Activated T-helper 1 cell treated with anti-CD3 and anti-CD28 coated beads, Interleukin-12 subunit alpha, Interleukin-12 subunit beta, Interleukin-2, Interleukin-4 antibody, amounts not matched to agents 30 ng/mL and 10 ng/mL and 1 ng/mL, durations not matched to agents 14 hours and 24 hours and 36 hours (primary cell): ENCODE measurements at regions of chr6 and their contacts with region 1.

Region 1: GRCh38 chr6:144149891-144150709 is at the start of gene STX11:
- DNase-seq: peak; percentile 78
- H3K4me3 Mint-ChIP-seq: peak within 1 kb of the TSS; percentile 91
- H3K27ac Mint-ChIP-seq: peak within 1 kb of the TSS; percentile 98
- H3K4me1 Mint-ChIP-seq: peaks cover 63% of the 10 kb centered on the region
- H3K27me3 Mint-ChIP-seq: peaks cover 1% of the 10 kb centered on the region
- total RNA-seq, gene STX11: 24.2 and 24.7 TPM in 2 replicates

Region 2: DNA sequence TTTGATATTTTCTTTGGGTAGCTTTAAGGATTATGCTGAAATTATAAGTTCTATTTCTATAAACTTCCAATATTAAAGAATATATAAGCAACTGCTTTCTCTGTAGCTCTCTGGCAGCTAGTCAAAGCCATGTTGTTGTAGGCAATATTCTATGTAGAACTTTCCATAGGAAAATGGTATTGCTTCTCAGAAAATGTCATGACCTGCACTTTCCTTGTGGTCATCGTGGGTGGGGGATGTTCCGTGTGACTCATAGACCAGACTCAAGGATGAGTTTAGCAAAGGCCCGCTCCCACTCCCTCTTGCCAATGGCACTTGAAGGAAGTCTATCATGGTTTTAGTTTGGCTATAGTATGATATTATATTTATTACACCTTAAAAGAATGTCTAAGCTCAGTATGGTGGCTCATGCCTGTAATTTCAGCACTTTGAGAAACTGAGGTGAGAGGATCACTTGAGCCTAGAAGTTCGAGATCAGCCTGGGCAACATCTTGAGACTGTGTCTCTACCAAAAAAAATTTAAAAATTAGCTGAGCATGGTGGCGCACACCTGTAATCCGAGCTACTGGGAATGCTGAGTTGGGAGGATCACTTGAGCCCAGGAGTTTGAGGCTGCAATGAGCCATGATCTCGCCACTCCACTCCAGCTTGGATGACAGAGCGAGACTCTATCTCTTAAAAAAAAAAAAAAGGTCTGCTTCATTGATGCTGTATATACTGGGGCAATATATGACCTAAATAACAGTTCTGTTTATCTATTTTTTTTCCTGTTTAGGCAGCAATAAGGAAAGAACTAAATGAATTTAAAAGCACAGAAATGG is 343.6 kb before region 1 on chr6:
- intact Hi-C with region 1: loop called (anchors 2 kb)
- DNase-seq: peak; percentile 48
- H3K4me3 Mint-ChIP-seq: peak overlapping the region; percentile 56
- H3K27ac Mint-ChIP-seq: peak overlapping the region; percentile 94
- H3K4me1 Mint-ChIP-seq: peaks cover 55% of the 10 kb centered on the region
- H3K27me3 Mint-ChIP-seq: peaks cover 3% of the 10 kb centered on the region

Region 3: DNA sequence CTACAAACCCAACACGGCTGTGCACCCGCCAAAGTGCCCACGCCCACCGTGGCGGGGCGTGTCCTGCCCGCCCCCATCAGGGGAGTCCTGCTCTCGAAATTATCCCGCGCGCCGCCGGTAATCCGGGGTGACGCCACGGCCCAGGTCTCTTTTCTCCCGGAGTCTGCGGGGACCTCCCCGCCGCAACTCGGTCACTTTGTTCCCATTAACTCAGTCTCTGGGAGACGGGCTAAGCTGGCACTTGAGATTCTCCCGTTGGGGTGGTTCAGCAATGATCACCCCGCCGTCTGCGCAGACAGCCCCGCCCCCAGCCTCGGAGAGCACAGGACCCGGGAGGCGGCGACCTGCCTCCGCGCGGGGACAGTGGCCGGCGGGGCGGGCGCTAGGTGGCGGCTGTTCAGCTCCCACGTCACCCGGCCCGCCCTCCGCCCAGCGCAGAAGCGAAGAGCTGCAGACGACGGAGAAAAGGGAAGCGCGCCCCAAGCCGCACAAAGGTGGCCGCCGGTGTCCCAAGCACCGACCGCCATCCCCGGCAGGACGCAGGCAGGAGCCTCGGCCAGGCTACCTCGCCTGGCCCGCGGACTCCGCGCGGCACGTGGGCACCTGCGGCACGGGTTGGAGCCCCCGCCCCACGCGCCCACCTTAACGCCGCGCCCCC is 86.2 kb before region 1 on chr6:
- intact Hi-C with region 1: loop called (anchors 2 kb)
- DNase-seq: peak; percentile 89
- H3K4me3 Mint-ChIP-seq: peak overlapping the region; percentile 83
- H3K27ac Mint-ChIP-seq: peak overlapping the region; percentile 82
- H3K4me1 Mint-ChIP-seq: peaks cover 44% of the 10 kb centered on the region
- H3K27me3 Mint-ChIP-seq: no peaks in the 10 kb centered on the region

Region 4: DNA sequence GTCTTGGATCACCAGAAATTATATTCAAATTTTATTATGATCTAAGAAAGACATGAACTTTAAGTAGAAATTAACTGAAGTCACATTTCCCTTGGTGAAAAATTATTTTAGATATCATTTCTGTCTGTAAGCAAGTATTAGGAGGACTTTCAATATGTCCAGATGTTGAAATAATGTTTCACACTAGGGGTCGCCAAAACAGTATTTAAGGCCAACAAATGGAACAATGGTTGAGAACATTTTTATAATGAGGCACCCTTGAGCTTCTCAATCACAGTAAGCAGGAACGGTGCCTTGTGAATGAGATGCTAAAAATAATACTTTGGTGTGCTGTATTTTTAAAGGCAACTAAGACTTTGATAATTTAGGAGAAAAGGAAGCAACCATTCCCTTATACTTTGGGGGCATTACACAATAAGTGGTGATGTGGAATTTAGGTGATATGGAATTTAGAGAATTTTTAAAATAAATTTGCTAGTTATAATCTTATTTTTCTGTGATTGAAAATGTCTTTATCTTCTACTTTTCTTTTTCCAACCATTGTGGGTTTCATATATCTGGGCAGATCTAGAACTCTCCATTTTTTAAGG is 45.1 kb before region 1 on chr6:
- intact Hi-C with region 1: loop called (anchors 1 kb)
- DNase-seq: peak; percentile 25
- H3K4me3 Mint-ChIP-seq: no peak overlapping the region
- H3K27ac Mint-ChIP-seq: no peak overlapping the region
- H3K4me1 Mint-ChIP-seq: peaks cover 13% of the 10 kb centered on the region
- H3K27me3 Mint-ChIP-seq: peaks cover 7% of the 10 kb centered on the region

Region 5: DNA sequence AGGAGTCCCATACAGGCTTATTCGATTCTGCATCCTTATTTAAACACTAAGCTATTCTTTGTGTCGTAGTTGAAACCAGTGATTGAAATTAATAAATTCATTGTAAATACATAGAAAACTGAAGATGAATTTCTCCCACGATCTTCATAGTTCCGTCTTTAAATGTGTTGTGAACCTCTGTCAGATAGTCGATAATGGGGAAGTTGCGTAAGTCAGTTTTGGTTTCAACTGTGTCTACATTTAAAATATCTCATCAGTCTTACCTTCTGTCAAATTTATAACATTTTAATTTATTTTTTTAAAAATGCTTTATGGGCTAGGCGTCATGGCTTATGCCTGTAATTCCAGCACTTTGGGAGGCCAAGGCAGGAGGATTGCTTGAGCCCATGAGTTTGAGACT is 12.9 kb after region 1 on chr6:
- intact Hi-C with region 1: no loop called
- DNase-seq: no peak
- H3K4me3 Mint-ChIP-seq: no peak overlapping the region
- H3K27ac Mint-ChIP-seq: no peak overlapping the region
- H3K4me1 Mint-ChIP-seq: peaks cover 34% of the 10 kb centered on the region
- H3K27me3 Mint-ChIP-seq: no peaks in the 10 kb centered on the region

Region 6: GRCh38 chr6:144179828-144180227 is 29.7 kb after region 1 on chr6:
- intact Hi-C with region 1: loop called (anchors 1 kb)
- DNase-seq: no peak
- H3K4me3 Mint-ChIP-seq: no peak overlapping the region
- H3K27ac Mint-ChIP-seq: no peak overlapping the region
- H3K4me1 Mint-ChIP-seq: peaks cover 47% of the 10 kb centered on the region
- H3K27me3 Mint-ChIP-seq: no peaks in the 10 kb centered on the region

Region 7: GRCh38 chr6:144343701-144344428 is 193.8 kb after region 1 on chr6:
- intact Hi-C with region 1: loop called (anchors 1 kb)
- DNase-seq: peak; percentile 36
- H3K4me3 Mint-ChIP-seq: peak overlapping the region; percentile 96
- H3K27ac Mint-ChIP-seq: peak overlapping the region; percentile 98
- H3K4me1 Mint-ChIP-seq: peaks cover 65% of the 10 kb centered on the region
- H3K27me3 Mint-ChIP-seq: no peaks in the 10 kb centered on the region

Region 8: DNA sequence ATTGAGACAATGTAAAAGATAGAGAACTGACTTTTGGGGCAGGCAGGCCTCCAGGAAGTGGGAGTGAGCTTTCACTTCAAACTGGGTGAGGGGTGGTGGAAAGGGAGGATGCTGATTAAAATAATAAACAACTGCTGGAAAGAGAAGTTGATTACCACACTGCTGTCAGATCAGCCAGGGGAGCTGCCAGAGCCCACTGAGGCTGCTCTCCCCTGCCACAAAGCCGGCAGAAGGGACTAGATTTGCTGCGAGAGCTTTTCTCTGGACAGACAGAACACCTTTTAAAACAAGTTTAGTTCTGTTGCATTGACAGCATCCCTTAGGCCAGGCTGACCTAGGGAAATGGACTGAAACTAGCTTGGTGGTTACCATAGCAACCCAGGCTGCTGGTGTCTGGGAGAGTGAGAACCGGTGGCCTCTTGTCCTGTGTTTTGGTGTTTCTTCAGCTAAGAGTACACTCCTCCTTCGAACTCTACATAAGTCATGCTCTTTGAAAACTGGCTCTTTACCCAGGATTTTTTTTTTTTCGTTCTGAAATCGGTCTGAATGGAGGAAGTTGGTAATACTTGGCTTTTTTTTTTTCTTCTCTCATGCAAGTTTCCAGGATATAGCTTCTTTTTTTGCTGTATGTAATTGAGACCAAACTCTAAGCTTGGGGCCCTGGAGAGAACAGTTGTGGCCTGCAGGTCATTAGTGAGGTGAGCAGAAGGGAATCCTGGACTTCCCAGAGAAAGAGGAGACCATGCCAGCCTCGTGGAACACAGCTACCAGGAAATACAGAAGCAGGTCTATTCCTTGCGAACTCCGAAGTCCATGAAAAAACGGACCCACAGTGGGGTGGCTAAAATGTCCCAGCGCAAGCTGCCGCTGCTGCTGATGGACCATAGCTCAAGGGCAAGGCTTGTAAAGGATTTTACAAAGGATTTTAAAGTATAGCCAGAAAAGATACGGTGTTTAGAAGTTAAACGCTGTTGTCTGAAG is 509.4 kb after region 1 on chr6:
- intact Hi-C with region 1: no loop called
- DNase-seq: peak; percentile 3
- H3K4me3 Mint-ChIP-seq: peak overlapping the region; percentile 15
- H3K27ac Mint-ChIP-seq: peak overlapping the region; percentile 69
- H3K4me1 Mint-ChIP-seq: peaks cover 36% of the 10 kb centered on the region
- H3K27me3 Mint-ChIP-seq: no peaks in the 10 kb centered on the region

Region 9: GRCh38 chr6:145963216-145964068 is 1813.3 kb after region 1 on chr6:
- intact Hi-C with region 1: loop called (anchors 10 kb)
- DNase-seq: peak; percentile 19
- H3K4me3 Mint-ChIP-seq: peak overlapping the region; percentile 98
- H3K27ac Mint-ChIP-seq: peak overlapping the region; percentile 93
- H3K4me1 Mint-ChIP-seq: peaks cover 40% of the 10 kb centered on the region
- H3K27me3 Mint-ChIP-seq: no peaks in the 10 kb centered on the region